Panc1 (cell line): ENCODE measurements at regions of chr10 and their contacts with region 1.

Region 1: GRCh38 chr10:127485153-127485857 is 63.8 kb upstream of the NPS start:
- DNase-seq: no peak
- ATAC-seq: no peak; the same call in 1 of the 2 replicates
- H3K4me3 ChIP-seq: no peak overlapping the region
- H3K27ac ChIP-seq: no peak overlapping the region
- H3K4me1 ChIP-seq: no peaks in the 10 kb centered on the region
- H3K27me3 ChIP-seq: peaks cover 17% of the 10 kb centered on the region
- CTCF ChIP-seq: no peak

Region 2: DNA sequence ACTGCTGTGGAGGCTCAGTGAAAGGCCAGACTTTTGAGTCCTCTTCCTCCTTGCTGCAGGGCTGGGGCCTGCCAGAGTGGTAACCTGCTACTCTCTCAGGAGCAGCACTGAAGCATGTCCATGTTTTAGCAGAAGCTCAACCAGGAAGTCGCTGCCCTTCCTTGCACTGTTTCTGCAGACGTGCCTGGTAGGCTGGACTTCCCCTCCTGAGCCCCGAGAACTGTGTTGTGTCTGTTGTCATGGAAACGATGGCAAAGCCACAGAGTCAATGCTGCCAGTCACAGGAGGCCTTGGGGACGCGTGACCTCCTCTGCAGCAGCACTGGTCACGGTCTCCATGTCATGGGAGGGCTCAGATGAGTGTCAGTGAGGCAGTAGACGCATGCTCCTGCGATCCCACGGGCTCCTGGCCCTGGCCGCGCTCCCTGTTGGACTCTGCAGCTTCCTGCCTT is 1443.5 kb before region 1 on chr10:
- CTCF ChIA-PET with region 1: no interaction called
- POLR2A ChIA-PET with region 1: interaction called, 18 read pairs
- in situ Hi-C with region 1: no loop called
- intact Hi-C with region 1: no loop called
- DNase-seq: no peak
- ATAC-seq: peak; percentile 68
- H3K4me3 ChIP-seq: no peak overlapping the region
- H3K27ac ChIP-seq: no peak overlapping the region
- H3K4me1 ChIP-seq: no peaks in the 10 kb centered on the region; the same call in 1 of the 2 replicates
- H3K27me3 ChIP-seq: no peaks in the 10 kb centered on the region
- CTCF ChIP-seq: no peak

Region 3: DNA sequence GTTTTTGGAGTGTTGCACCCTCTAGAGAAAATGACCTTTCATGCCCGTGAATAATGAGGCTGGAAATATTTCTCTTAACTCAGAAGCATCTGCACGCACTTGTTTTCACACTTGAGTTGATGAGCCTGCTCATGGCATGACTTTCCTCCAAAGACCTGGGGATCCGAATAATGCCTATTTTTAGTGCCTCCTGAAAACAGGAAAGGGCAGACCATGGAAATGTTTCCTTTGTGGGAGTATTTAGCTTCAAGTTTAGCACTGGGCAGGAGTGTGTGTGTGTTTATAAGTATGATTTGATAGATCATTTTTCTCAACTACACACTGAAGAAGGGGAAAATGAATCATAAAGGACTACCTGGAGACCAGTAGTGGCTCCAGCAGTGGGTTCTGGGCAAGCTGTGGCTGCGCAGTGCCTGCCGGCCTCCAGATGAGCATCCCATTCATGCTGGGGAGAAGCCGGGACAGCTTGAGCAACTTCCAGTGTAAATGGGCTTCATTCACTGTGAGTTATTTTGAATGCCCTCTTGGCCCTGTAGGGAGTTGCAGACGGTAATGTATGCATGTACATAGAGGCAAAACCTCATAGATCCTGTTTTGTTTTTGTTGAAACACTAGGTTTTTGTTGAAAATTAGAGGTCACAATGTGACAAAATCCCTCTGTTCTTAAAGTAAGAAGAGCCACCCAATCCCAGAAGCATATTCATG is 171.2 kb before region 1 on chr10:
- CTCF ChIA-PET with region 1: no interaction called
- POLR2A ChIA-PET with region 1: no interaction called
- in situ Hi-C with region 1: no loop called
- intact Hi-C with region 1: no loop called
- DNase-seq: no peak
- ATAC-seq: no peak
- H3K4me3 ChIP-seq: no peak overlapping the region
- H3K27ac ChIP-seq: no peak overlapping the region
- H3K4me1 ChIP-seq: no peaks in the 10 kb centered on the region
- H3K27me3 ChIP-seq: no peaks in the 10 kb centered on the region
- CTCF ChIP-seq: no peak

Region 4: GRCh38 chr10:127368929-127369328 is 116.4 kb before region 1 on chr10:
- CTCF ChIA-PET with region 1: no interaction called
- POLR2A ChIA-PET with region 1: no interaction called
- in situ Hi-C with region 1: no loop called
- intact Hi-C with region 1: no loop called
- DNase-seq: no peak
- ATAC-seq: no peak
- H3K4me3 ChIP-seq: no peak overlapping the region
- H3K27ac ChIP-seq: no peak overlapping the region
- H3K4me1 ChIP-seq: no peaks in the 10 kb centered on the region
- H3K27me3 ChIP-seq: no peaks in the 10 kb centered on the region
- CTCF ChIP-seq: no peak

Region 5: DNA sequence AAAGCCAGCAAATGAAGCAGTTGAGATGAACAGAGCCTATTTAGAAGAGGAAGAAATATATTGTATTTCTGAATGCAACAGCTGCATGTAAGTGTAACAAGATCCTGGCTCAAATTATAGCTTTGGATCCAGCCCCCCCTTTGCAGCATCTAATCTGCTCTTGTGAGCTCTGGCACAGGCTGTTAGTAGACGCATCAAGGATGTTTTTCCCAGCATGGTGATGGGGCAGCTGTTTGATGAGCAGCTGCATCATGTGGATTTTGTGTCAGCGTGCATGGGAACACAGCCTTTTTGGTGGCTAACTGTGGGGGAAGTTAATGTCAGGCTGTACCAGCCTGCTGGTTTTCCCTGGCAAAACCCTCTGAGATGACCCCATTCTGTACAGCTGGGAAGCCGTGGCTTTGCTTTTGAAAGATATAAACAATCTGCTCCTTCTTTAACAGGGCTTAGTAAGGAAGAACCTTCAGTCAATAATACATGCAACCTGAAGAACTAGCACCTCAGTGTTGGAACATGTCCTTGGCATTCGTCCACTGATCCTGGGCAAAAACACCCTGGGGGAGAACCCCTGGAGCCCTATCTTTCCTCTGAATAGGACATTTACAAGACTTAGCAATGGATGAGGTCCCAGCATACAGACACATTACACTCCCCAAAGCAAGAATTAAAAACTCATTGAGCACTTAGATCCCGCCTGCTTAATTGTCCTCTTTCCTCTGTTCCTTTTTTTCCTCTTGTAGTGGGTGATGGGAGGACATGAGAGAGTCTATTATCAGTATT is 134.4 kb after region 1 on chr10:
- CTCF ChIA-PET with region 1: no interaction called
- POLR2A ChIA-PET with region 1: no interaction called
- in situ Hi-C with region 1: no loop called
- intact Hi-C with region 1: no loop called
- DNase-seq: no peak
- ATAC-seq: no peak
- H3K4me3 ChIP-seq: no peak overlapping the region
- H3K27ac ChIP-seq: no peak overlapping the region
- H3K4me1 ChIP-seq: no peaks in the 10 kb centered on the region
- H3K27me3 ChIP-seq: peaks cover 5% of the 10 kb centered on the region
- CTCF ChIP-seq: no peak

Region 6: DNA sequence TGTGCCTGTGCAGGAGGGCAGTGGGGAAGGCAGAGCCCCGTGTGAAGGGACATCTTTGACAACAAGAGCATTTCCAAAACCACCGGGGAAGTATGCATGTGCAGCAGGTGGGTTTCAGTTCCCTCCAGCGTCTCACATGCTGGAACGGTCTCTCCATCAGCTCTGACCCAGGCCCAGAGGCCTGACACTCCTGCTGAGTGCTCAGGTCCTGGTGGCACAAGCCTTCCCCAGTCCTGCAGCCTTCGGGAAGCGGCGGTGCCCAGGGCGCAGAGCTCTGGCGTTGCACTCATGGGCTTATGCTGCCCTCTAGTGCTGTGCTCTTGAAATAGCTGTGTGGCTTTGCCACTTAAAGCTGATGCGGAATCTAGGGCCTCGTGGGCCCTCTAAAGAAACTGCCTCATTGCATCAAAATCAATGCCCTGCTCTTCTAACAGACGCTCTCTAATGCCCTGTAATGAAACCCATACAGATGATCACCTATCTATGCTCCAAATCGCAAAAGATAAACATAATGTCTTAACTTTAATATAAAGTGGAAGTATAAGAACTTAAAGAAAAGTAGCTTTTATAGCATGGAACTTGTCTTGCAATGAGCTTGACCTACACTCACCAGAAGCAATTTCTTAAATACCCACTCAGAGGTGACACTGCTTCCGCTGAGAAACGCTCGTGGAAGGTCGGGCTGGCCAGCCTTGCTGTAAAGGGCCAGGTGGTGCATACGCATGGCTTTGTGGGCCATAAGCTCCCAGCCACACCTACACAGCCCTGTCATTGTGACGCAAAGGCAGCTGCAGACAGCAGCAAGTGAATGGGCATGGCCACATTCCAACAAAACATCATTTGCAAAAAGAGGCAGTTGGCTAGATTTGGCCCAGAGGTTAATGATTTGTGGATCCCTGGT is 368.8 kb after region 1 on chr10:
- CTCF ChIA-PET with region 1: interaction called, 3 read pairs
- POLR2A ChIA-PET with region 1: no interaction called
- in situ Hi-C with region 1: no loop called
- intact Hi-C with region 1: loop called (anchors 10 kb)
- DNase-seq: peak; percentile 45
- ATAC-seq: peak; percentile 97
- H3K4me3 ChIP-seq: no peak overlapping the region
- H3K27ac ChIP-seq: no peak overlapping the region
- H3K4me1 ChIP-seq: 0 out of 2 replicates have a peak, but pooled peaks cover 2% of the 10 kb centered on the region
- H3K27me3 ChIP-seq: peaks cover 5% of the 10 kb centered on the region; the same call in 1 of the 2 replicates
- CTCF ChIP-seq: peak; percentile 95

Region 7: GRCh38 chr10:127872871-127873600 is 387.7 kb after region 1 on chr10:
- CTCF ChIA-PET with region 1: no interaction called
- POLR2A ChIA-PET with region 1: no interaction called
- in situ Hi-C with region 1: no loop called
- intact Hi-C with region 1: no loop called
- DNase-seq: no peak
- ATAC-seq: peak; percentile 72; the same call in 1 of the 2 replicates
- H3K4me3 ChIP-seq: no peak overlapping the region
- H3K27ac ChIP-seq: no peak overlapping the region
- H3K4me1 ChIP-seq: no peaks in the 10 kb centered on the region
- H3K27me3 ChIP-seq: peaks cover 24% of the 10 kb centered on the region
- CTCF ChIP-seq: no peak